Aorta (tissue), 5 donors: ENCODE measurements at regions of chr1 and their contacts with region 1.

Region 1: GRCh38 chr1:26169669-26170471 is at the start of gene ZNF593:
- DNase-seq: peak; percentile 95 to 98
- ATAC-seq: peak; percentile 96
- H3K4me3 ChIP-seq: peak within 1 kb of the TSS; percentile 44 to 52
- H3K27ac ChIP-seq: no peak within 1 kb of the TSS
- H3K4me1 ChIP-seq: no peaks in the 10 kb centered on the region
- H3K27me3 ChIP-seq: no peaks in the 10 kb centered on the region
- total RNA-seq, gene ZNF593: 13.4 to 18.3 TPM

Region 2: DNA sequence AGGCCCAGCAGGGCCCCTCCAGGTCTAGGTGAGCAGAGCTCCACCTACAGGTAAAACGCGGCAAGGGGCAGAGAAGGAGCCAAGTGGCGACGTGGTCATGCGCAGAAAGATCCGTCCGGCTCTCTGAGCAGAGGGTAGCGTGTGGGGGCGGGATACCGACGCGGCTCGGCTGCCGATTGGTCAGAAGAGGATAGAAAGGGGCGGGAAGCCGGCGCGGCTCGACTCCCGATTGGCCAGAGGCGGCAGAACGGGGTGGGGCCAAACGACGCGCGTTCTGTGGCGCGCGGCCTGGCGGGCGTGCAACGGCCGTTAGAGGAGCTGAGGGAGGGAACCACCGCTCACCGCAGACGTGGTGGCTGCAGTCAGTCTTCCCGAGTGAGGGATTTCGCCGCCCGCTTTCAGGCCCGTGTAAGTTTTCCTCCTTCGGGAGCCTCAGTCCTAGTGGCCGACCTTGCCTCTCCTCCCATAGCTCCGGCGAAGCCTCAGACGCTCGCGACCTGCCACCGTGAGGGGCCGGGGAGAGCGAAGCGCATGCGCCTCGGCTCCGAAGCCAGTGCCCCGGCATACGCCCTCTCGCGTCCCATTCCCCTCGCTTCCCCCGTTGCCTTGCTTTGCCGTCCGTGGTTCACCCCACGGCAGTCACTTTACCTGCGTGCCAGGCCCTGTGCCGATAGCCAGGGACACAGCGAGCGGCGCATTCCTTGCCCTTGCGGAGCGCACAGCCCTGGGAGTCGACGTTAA is 64.2 kb after region 1 on chr1 and contains the start of gene CEP85:
- intact Hi-C with region 1: loop called in 1 of 2 experiments (anchors 2 kb)
- DNase-seq: peak; percentile 98 to 99
- ATAC-seq: peak; percentile 100
- H3K4me3 ChIP-seq: peak within 1 kb of the TSS; percentile 39 to 40
- H3K27ac ChIP-seq: peak within 1 kb of the TSS in 1 of 2 donors; percentile 61
- H3K4me1 ChIP-seq: no peaks in the 10 kb centered on the region
- H3K27me3 ChIP-seq: no peaks in the 10 kb centered on the region
- total RNA-seq, gene CEP85: 3.0 to 5.9 TPM

Region 3: DNA sequence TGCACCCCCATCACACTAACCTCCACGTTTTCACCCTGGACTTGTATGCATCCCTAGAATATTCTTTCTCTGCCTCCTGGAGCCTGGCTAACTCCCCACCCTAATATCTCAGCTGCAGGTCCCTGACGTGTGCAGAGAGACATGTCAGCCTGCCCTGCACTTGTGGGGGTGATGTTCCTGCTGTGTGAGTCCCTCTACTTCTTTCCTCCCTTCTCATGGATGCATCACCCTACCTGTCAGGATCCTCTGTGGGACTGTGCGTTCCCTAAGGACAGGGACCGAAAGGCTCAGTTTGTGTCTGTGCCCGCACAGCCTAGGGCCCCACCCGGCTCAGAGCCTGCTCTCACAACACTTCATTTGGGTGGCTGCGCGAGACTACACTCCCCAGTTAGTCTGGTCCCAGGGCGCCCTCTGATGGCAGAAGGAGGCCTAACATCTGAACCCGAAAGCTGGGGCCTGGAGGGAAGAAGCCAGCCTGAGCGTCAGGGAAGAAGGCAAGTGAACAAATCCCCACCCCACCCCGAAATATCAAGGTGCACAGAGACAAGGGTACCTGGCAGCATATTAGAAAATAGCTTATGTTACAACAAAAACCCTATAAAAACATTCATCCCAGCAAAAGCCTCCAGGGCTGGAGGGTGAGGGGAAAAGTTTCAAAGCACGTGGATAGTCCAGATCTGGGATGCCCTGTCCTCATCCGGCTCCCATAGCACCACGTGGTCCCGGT is 151.6 kb after region 1 on chr1:
- intact Hi-C with region 1: loop called in 1 of 2 experiments (anchors 2 kb)
- DNase-seq: peak; percentile 95 to 97
- ATAC-seq: peak; percentile 92
- H3K4me3 ChIP-seq: no peak overlapping the region
- H3K27ac ChIP-seq: no peak overlapping the region
- H3K4me1 ChIP-seq: no peaks in the 10 kb centered on the region
- H3K27me3 ChIP-seq: no peaks in the 10 kb centered on the region